Activated naive CD4-positive, alpha-beta T cell treated with anti-CD3 and anti-CD28 coated beads for 36 hours (primary cell): ENCODE measurements at regions of chr1 and their contacts with region 1.

Region 1: DNA sequence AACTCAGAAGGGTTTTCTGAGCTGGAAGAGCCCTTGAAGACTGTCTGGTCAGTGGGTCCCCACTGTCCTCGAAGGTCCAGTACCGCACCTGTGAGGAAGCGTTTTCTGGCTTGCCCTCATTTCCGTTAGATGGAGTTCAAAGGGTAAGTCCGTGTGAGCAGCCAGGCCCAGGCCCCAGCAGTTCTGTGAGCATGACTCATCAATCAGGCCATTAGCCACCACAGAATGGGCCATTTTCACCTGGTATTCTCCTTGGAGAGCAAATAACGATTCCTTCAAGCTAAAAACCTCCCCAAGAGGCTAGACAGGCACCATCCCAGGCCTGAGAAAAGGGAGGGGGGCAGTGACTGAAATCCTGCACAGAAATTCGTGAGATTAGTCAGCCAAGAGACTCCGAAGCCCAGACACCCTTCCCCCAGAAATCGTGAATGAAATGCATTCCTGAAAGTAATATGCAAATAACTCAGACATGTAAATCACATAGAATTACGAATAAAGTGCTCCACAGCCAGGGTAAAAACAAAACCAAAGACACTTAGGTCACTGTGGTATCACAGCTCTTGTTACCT is 66.0 kb downstream of the BCAR3 start:
- DNase-seq: peak; percentile 76
- H3K4me3 Mint-ChIP-seq: no peak overlapping the region
- H3K27ac Mint-ChIP-seq: no peak overlapping the region
- H3K4me1 Mint-ChIP-seq: peaks cover 17% of the 10 kb centered on the region
- H3K27me3 Mint-ChIP-seq: peaks cover 3% of the 10 kb centered on the region

Region 2: DNA sequence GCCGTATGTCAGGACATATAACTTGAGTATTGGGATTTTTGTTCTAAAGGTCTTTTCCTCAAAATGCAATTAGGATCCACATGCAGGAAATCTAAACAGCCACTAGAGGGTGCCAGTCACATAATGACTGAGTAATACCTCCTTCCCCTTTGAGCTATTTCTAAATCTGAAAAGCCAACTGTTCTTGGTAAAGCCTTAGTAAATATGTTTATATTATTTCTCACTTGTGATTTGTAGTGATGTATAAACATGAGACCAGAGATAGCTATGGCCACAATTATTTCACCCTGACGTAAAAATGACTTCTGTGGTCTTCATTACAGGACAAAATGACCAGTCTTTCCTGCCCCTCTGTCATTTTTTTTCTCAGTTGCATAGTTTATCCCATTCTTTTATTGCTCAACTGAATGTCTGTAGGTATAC is 310.9 kb before region 1 on chr1:
- CTCF ChIA-PET with region 1: interaction called, 5 read pairs
- intact Hi-C with region 1: loop called (anchors 2 kb)
- DNase-seq: peak; percentile 67
- H3K4me3 Mint-ChIP-seq: no peak overlapping the region
- H3K27ac Mint-ChIP-seq: no peak overlapping the region
- H3K4me1 Mint-ChIP-seq: no peaks in the 10 kb centered on the region
- H3K27me3 Mint-ChIP-seq: no peaks in the 10 kb centered on the region

Region 3: DNA sequence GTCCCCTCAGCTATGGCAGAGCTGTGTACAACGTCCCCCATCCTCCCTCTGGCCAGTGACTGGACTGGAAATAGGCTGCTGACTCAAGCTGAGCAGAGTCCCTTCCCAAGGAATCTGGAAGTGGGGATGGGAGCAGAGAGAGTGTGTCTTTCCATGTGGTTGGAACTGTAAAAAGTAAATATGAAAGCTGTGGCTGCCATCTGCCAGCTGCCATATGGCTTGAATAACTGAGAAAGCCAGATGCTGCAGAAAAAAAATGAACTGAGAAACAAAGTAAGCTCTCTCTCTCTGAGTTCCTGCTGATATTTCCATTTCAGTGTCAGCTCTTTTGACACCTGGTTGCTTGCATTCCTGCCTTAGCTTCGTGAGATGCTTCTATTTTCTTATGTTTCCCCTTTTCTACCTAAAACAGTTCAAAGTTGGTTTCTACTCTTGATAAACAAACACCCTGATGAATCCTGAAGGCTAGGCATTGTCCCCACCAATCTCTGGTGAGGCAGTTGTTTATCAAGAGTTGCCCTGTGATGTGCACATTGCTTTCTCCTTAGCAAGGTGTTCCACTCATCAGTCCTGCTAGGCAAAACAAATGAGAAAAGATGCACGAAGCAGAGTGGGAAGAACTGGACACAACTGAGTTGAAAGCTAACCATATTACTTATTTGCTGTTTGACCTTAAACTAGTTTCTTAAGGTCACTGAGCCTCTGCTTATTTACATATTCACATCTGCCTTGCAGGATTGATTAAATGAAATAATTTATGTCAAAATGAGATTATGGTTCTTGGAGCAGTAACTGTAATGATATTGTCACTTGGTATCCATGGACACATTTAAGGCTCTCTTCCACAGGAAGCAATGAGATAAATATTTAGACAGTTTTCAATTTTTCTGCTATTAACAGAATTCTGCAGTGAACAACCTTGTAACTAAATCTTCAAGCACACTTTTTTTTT is 286.6 kb before region 1 on chr1:
- CTCF ChIA-PET with region 1: no interaction called
- intact Hi-C with region 1: no loop called
- DNase-seq: no peak
- H3K4me3 Mint-ChIP-seq: no peak overlapping the region
- H3K27ac Mint-ChIP-seq: no peak overlapping the region
- H3K4me1 Mint-ChIP-seq: no peaks in the 10 kb centered on the region
- H3K27me3 Mint-ChIP-seq: no peaks in the 10 kb centered on the region

Region 4: DNA sequence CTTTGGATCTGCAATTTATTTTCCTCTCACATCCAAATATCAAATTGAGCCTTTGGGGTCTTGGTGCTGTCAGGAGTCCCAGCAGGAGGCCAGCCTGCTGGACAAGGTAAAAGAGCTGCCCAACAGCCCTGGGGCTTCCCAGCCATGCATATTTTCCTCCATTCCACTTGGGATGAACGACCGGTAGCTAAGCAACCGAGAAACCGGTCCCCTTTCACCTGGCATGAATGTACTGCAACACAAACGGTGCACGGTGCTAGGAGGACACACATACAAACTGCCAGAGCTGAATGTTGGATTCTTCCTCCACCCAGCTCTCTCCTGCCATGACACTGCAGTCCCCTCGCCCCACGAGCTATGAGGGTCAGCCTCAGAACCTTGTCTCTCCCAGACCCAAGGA is 23.3 kb after region 1 on chr1:
- CTCF ChIA-PET with region 1: no interaction called
- intact Hi-C with region 1: loop called (anchors 2 kb)
- DNase-seq: no peak
- H3K4me3 Mint-ChIP-seq: no peak overlapping the region
- H3K27ac Mint-ChIP-seq: no peak overlapping the region
- H3K4me1 Mint-ChIP-seq: peaks cover 6% of the 10 kb centered on the region
- H3K27me3 Mint-ChIP-seq: no peaks in the 10 kb centered on the region